ENCODE measurements at regions of chr1 and their contacts with region 1.

Region 1: GRCh38 chr1:200669314-200670241 is at the start of gene DDX59:
- DNase-seq: peak; percentile 94
- H3K4me3 ChIP-seq: peak within 1 kb of the TSS; percentile 86
- H3K27ac ChIP-seq: peak within 1 kb of the TSS; percentile 98
- H3K27me3 ChIP-seq: no peaks in the 10 kb centered on the region
- CTCF ChIP-seq: no peak
- polyA plus RNA-seq, gene DDX59: 10.8 and 15.0 TPM in 2 replicates

Region 2: DNA sequence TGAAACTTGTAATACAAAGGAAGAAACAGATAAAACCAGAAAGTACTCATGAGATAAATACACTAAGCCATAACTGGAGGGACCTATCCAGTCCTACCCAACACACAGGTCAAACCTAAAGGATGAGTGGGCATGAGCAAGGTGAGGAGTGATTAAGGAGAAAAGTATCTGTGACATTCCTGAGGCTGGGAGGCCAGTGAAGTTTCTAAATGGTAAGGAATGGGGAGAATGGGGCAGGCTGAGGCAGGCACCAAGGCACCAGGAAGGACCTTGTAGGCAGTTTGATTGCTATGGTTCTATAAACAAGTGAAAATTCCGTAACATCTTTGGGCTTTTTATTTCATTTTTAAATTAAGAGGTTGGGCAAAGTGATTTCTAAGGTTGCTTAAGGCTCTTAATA is 10.3 kb before region 1 on chr1:
- CTCF ChIA-PET with region 1: no interaction called
- POLR2A ChIA-PET with region 1: interaction called, 19 read pairs
- DNase-seq: peak; percentile 2
- H3K4me3 ChIP-seq: no peak overlapping the region
- H3K27ac ChIP-seq: no peak overlapping the region
- H3K27me3 ChIP-seq: no peaks in the 10 kb centered on the region
- CTCF ChIP-seq: no peak